Activated CD8-positive, alpha-beta T cell treated with anti-CD3 and anti-CD28 coated beads, Interleukin-2, amount 10 ng/mL, durations not matched to agents 7 days and 5 days (primary cell): ENCODE measurements at regions of chr12 and their contacts with region 1.

Region 1: DNA sequence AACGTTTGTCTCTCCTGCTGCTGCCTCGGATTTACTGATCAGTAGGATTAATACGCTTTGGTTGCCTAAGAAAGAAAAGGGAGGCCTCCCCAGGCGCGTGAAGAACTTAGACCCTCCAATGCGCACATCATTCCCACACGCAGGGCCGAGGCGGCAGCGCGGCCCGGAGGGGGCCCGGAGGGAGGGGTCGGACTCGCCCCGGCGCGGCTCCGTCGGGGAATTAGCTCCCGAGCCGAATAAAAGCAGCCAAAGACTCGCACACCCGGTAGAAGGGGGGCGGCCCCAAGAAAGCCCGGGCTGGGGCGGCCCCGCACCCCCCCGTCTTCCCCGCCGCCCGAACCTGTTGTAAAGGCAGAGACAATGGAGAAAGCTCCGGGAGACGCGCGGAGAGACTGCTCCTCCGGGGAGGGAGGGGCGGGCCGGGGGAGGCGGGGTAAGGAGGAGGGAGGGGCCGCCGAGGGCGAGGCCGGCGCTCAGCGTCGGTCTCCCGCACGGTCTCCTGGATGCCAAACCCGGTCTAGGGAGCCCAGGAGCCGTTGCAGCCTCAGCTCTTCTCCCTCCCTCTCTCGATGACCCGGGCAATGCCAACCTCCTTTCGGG is at the start of gene NELL2:
- DNase-seq: peak; percentile 77
- ATAC-seq: peak; percentile 80
- H3K4me3 Mint-ChIP-seq: peak within 1 kb of the TSS; percentile 100
- H3K27ac Mint-ChIP-seq: peak within 1 kb of the TSS; percentile 86
- H3K4me1 Mint-ChIP-seq: peaks cover 33% of the 10 kb centered on the region
- H3K27me3 Mint-ChIP-seq: peaks cover 2% of the 10 kb centered on the region
- total RNA-seq, gene NELL2: 43.8 to 47.4 TPM

Region 2: DNA sequence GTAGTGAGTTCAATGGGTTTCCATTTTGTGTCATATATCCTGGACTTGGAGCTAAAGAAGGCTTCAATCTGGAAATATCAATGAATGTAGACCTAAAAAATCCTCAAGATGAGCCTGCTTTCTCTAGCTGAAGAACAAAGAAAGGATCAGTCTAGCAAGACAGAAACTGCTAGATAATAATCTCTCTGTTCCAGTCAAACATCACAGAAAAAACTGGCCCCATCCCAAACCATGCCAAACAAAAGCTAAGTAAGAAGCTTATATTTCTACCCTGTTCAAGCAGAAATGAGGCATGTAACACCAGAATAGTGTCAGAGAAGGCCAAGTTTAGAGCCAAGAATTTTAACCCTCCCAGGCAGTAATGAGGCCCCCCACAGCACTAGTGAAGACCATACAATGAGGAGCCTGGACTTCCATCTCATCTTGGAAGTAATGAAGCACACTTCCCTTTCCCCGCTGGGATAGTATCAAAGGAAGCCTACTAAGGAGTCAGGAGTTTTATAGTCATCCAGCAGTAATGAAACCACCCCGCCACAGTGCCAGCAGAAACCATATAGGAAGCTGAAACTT is 95.7 kb before region 1 on chr12:
- CTCF ChIA-PET with region 1: interaction called, 62 read pairs
- POLR2A ChIA-PET with region 1: interaction called, 5 read pairs
- DNase-seq: no peak
- ATAC-seq: no peak
- H3K4me3 Mint-ChIP-seq: no peak overlapping the region
- H3K27ac Mint-ChIP-seq: no peak overlapping the region
- H3K4me1 Mint-ChIP-seq: peaks cover 5% of the 10 kb centered on the region
- H3K27me3 Mint-ChIP-seq: no peaks in the 10 kb centered on the region

Region 3: GRCh38 chr12:44817687-44818086 is 58.4 kb before region 1 on chr12:
- CTCF ChIA-PET with region 1: interaction called, 142 read pairs
- POLR2A ChIA-PET with region 1: interaction called, 14 read pairs
- DNase-seq: no peak
- ATAC-seq: no peak
- H3K4me3 Mint-ChIP-seq: no peak overlapping the region
- H3K27ac Mint-ChIP-seq: peak overlapping the region; percentile 47
- H3K4me1 Mint-ChIP-seq: peaks cover 72% of the 10 kb centered on the region
- H3K27me3 Mint-ChIP-seq: no peaks in the 10 kb centered on the region

Region 4: GRCh38 chr12:44835641-44836379 is 40.2 kb before region 1 on chr12:
- CTCF ChIA-PET with region 1: interaction called, 94 read pairs
- POLR2A ChIA-PET with region 1: interaction called, 5 read pairs
- DNase-seq: peak; percentile 48
- ATAC-seq: peak; percentile 66
- H3K4me3 Mint-ChIP-seq: peak overlapping the region; percentile 40
- H3K27ac Mint-ChIP-seq: peak overlapping the region; percentile 86
- H3K4me1 Mint-ChIP-seq: peaks cover 90% of the 10 kb centered on the region
- H3K27me3 Mint-ChIP-seq: no peaks in the 10 kb centered on the region

Region 5: DNA sequence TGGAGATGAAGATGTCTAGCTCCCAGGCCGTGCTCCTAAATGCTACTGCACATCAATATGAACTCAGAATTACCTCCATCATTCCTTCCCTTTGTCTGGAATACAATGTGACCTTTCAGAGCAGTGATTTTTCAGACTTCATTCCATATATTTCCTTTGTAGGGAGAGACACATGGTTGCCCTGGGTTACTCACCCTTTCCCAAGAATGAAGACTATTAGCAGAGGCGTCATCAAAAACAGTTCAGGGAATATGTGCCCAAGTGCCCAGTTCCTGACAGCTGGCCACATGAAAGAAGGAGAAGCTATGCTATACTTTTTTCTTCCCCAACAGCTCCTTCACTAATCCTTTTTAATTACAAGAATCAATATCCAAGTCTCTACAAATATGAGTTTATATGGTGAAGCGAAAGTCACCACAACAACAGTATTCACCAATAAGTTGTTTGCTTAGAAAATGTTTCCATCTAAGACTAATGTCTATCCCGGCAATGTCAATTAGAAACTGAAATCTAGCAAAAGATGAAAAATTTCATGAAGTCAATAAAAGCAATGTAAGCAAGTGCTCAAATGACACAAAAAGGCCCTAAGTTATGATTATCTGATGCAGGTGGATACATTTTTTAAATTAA is 17.7 kb before region 1 on chr12:
- CTCF ChIA-PET with region 1: interaction called, 19 read pairs
- POLR2A ChIA-PET with region 1: interaction called, 4 read pairs
- DNase-seq: no peak
- ATAC-seq: no peak
- H3K4me3 Mint-ChIP-seq: no peak overlapping the region
- H3K27ac Mint-ChIP-seq: no peak overlapping the region
- H3K4me1 Mint-ChIP-seq: peaks cover 65% of the 10 kb centered on the region
- H3K27me3 Mint-ChIP-seq: no peaks in the 10 kb centered on the region

Region 6: GRCh38 chr12:44960856-44961255 is 84.8 kb after region 1 on chr12:
- CTCF ChIA-PET with region 1: no interaction called
- POLR2A ChIA-PET with region 1: no interaction called
- DNase-seq: no peak
- ATAC-seq: no peak
- H3K4me3 Mint-ChIP-seq: no peak overlapping the region
- H3K27ac Mint-ChIP-seq: no peak overlapping the region
- H3K4me1 Mint-ChIP-seq: no peaks in the 10 kb centered on the region
- H3K27me3 Mint-ChIP-seq: peaks cover 7% of the 10 kb centered on the region